CD4-positive, alpha-beta T cell (primary cell): ENCODE measurements at regions of chr6 and their contacts with region 1.

Region 1: DNA sequence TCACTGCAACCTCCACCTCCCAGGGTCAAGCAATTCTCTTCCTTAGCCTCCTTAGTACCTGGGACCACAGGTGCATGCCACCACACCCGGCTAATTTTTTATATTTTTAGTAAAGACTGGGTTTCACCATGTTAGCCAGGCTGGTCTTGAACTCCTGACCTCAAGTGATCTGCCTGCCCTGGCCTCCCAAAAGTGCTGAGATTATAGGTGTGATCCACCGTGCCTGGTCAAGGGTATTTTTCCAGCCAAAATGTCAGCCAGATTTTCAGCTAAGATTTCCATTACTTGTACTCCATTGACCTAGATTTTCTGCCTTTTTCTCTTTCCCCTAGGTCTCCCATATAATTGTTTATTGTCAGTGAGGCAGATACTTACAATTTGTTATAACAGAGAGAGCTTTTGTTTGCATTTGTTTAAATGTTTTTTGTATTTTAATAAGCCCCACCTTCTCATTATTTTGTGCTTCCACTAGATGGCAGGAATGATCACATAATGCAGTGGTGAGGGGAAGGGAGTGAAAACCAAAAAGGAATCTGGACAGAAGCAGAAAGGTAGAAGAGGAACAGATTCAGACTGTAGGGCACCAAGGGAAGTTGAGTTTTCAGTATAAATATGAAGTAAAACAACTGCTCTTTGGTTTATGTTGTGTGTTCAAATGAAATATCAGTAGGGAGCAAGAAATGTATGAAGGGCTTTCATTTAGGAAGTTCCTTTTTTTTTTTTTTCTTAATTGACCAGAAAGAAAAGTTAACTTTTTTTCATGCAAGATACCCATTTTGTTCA is 29.7 kb downstream of the RPF2 start:
- DNase-seq: peak in 4 of 14 experiments; percentile 3 to 64 (median 57)
- ATAC-seq: peak; percentile 82
- H3K4me3 ChIP-seq: no peak overlapping the region
- H3K4me3 Mint-ChIP-seq: no peak overlapping the region
- H3K27ac ChIP-seq: no peak overlapping the region
- H3K27ac Mint-ChIP-seq: no peak overlapping the region
- H3K4me1 ChIP-seq: no peaks in the 10 kb centered on the region
- H3K4me1 Mint-ChIP-seq: peaks cover 5% of the 10 kb centered on the region
- H3K27me3 ChIP-seq: no peaks in the 10 kb centered on the region
- H3K27me3 Mint-ChIP-seq: no peaks in the 10 kb centered on the region
- CTCF ChIP-seq: peak; percentile 78

Region 2: GRCh38 chr6:110890288-110890687 is 121.3 kb before region 1 on chr6:
- CTCF ChIA-PET with region 1: no interaction called
- POLR2A ChIA-PET with region 1: no interaction called
- intact Hi-C with region 1: no loop called
- DNase-seq: no peak
- ATAC-seq: no peak
- H3K4me3 ChIP-seq: no peak overlapping the region
- H3K4me3 Mint-ChIP-seq: no peak overlapping the region
- H3K27ac ChIP-seq: no peak overlapping the region
- H3K27ac Mint-ChIP-seq: no peak overlapping the region
- H3K4me1 ChIP-seq: peaks cover 21% of the 10 kb centered on the region
- H3K4me1 Mint-ChIP-seq: peaks cover 34% of the 10 kb centered on the region
- H3K27me3 ChIP-seq: no peaks in the 10 kb centered on the region
- H3K27me3 Mint-ChIP-seq: no peaks in the 10 kb centered on the region
- CTCF ChIP-seq: no peak

Region 3: GRCh38 chr6:111210194-111210728 is 198.7 kb after region 1 on chr6:
- CTCF ChIA-PET with region 1: interaction called, 6 read pairs
- POLR2A ChIA-PET with region 1: no interaction called
- intact Hi-C with region 1: loop called (anchors 1 kb)
- DNase-seq: peak in 5 of 14 experiments; percentile 9 to 76 (median 68)
- ATAC-seq: peak; percentile 83
- H3K4me3 ChIP-seq: no peak overlapping the region
- H3K4me3 Mint-ChIP-seq: no peak overlapping the region
- H3K27ac ChIP-seq: no peak overlapping the region
- H3K27ac Mint-ChIP-seq: no peak overlapping the region
- H3K4me1 ChIP-seq: no peaks in the 10 kb centered on the region
- H3K4me1 Mint-ChIP-seq: peaks cover 6% of the 10 kb centered on the region
- H3K27me3 ChIP-seq: no peaks in the 10 kb centered on the region
- H3K27me3 Mint-ChIP-seq: no peaks in the 10 kb centered on the region
- CTCF ChIP-seq: peak; percentile 82